MCF 10A (cell line): ENCODE measurements at regions of chr3 and their contacts with region 1.

Region 1: GRCh38 chr3:5122030-5122740 is at the start of gene ARL8B:
- DNase-seq: peak; percentile 84
- H3K4me3 Mint-ChIP-seq: peak within 1 kb of the TSS; percentile 75
- H3K27ac Mint-ChIP-seq: peak within 1 kb of the TSS; percentile 82
- H3K4me1 Mint-ChIP-seq: peaks cover 12% of the 10 kb centered on the region
- H3K27me3 Mint-ChIP-seq: no peaks in the 10 kb centered on the region
- CTCF ChIP-seq: peak; percentile 92
- total RNA-seq, gene ARL8B: 53.6 and 74.3 TPM in 2 replicates

Region 2: DNA sequence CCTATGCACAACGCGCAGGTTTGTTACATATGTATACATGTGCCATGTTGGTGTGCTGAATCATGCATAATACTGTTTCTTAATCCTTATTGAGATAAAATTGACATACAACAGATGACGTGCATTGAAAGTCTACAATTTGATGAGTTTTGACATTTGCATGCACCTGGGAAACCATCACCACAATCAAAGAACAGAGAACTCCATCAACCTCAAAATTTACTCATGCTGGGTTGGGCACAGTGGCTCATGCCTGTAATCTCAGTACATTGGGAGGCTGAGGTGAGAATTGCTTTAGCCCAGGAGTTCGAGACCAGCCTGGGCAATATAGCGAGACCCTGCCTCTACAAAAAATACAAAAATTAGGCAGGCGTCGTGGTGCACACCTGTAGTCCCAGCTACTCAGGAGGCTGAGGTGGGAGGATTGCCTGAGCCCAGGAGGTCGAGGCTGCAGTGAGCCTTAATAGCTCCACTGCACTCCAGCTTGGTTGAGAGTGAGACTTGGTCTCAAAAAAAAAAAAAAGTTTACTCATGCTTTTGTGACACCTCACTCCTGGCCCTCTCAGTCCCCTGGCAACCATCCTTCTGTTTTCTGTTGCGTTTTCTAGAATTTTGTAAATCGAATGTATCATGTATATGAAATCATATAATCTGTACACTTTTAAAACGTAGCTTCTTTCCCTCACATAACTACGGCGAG is 86.3 kb before region 1 on chr3:
- CTCF ChIA-PET with region 1: no interaction called
- POLR2A ChIA-PET with region 1: no interaction called
- intact Hi-C with region 1: no loop called
- DNase-seq: no peak
- H3K4me3 Mint-ChIP-seq: no peak overlapping the region
- H3K27ac Mint-ChIP-seq: no peak overlapping the region
- H3K4me1 Mint-ChIP-seq: no peaks in the 10 kb centered on the region
- H3K27me3 Mint-ChIP-seq: no peaks in the 10 kb centered on the region
- CTCF ChIP-seq: no peak

Region 3: DNA sequence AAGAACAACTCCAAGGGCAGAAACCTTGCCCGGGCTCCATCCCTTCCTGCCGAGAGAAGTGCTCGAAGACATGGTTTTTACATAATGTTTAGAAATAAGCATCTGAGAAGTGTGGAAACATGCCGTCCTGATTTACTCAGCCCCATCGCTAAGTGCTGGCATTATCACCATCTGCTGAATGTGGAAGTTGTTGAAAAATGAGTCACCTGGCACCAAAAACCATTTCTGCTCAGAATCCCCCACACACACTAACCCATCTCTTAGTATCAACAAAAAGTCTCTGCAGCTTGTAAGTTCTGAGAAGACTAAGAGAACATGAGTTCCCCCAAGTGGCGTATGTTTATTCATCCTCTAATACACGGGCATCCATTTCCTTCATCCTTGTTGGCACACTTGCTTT is 51.1 kb before region 1 on chr3:
- CTCF ChIA-PET with region 1: interaction called, 13 read pairs
- POLR2A ChIA-PET with region 1: interaction called, 23 read pairs
- intact Hi-C with region 1: no loop called
- DNase-seq: peak; percentile 78
- H3K4me3 Mint-ChIP-seq: no peak overlapping the region
- H3K27ac Mint-ChIP-seq: peak overlapping the region; percentile 42
- H3K4me1 Mint-ChIP-seq: peaks cover 24% of the 10 kb centered on the region
- H3K27me3 Mint-ChIP-seq: no peaks in the 10 kb centered on the region
- CTCF ChIP-seq: no peak

Region 4: GRCh38 chr3:5078151-5078550 is 44.0 kb before region 1 on chr3:
- CTCF ChIA-PET with region 1: interaction called, 13 read pairs
- POLR2A ChIA-PET with region 1: interaction called, 21 read pairs
- intact Hi-C with region 1: no loop called
- DNase-seq: peak; percentile 89
- H3K4me3 Mint-ChIP-seq: no peak overlapping the region
- H3K27ac Mint-ChIP-seq: peak overlapping the region; percentile 27
- H3K4me1 Mint-ChIP-seq: peaks cover 5% of the 10 kb centered on the region
- H3K27me3 Mint-ChIP-seq: no peaks in the 10 kb centered on the region
- CTCF ChIP-seq: no peak

Region 5: DNA sequence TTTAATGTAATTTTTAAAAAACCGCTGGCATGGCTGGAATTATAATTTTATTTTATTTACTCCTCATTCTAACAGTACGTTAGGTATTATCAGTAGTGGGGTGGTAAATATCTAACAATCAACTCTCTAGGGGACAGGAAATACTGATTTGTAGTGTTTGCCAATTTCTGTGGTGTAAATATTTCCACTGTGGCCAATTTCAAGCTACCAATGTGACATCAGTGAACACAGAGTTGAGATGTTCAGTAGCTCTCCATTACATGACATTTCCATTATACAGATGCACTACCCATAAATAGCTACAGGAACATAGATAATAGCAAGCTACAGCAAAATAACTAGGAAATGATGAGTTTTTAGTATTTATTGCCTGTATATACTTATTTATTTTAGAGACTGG is 10.1 kb before region 1 on chr3:
- CTCF ChIA-PET with region 1: interaction called, 10 read pairs
- POLR2A ChIA-PET with region 1: interaction called, 3 read pairs
- intact Hi-C with region 1: no loop called
- DNase-seq: no peak
- H3K4me3 Mint-ChIP-seq: no peak overlapping the region
- H3K27ac Mint-ChIP-seq: no peak overlapping the region
- H3K4me1 Mint-ChIP-seq: peaks cover 10% of the 10 kb centered on the region
- H3K27me3 Mint-ChIP-seq: no peaks in the 10 kb centered on the region
- CTCF ChIP-seq: no peak

Region 6: DNA sequence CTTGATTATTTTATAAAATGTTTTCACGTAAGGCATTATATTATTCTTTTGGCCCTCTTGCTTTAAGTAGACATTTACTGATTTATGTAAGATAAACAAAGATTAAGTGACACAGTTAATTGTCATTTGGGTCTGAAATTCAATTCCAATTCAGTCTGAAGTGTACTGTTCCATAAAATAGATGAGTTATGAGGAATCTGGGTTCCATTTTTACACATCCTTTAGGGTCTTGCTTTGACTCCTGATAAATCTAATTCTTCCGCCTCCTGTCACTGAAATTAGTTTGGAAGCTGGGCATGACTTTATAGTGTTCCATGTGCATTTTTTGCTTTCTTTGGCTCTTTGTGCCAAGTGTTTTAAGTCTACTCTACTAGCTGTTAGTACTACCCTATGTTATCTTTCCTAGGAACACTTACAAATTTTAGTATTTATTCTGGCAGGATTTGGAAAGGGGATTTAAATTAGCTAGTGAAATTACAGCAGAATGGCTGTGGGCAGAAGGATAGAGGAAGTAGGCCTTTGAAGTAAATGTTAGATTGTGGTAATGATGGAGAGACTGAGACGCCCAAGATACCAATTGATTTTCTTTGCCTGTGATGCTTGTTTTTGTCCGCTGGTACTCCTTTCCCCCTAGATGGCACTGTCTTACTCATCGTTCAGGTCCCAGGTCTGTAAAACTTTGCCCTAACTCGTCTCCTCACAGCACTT is 14.2 kb after region 1 on chr3:
- CTCF ChIA-PET with region 1: interaction called, 11 read pairs
- POLR2A ChIA-PET with region 1: interaction called, 18 read pairs
- intact Hi-C with region 1: no loop called
- DNase-seq: peak; percentile 66
- H3K4me3 Mint-ChIP-seq: peak overlapping the region; percentile 11
- H3K27ac Mint-ChIP-seq: peak overlapping the region; percentile 86
- H3K4me1 Mint-ChIP-seq: peaks cover 63% of the 10 kb centered on the region
- H3K27me3 Mint-ChIP-seq: no peaks in the 10 kb centered on the region
- CTCF ChIP-seq: peak; percentile 31

Region 7: GRCh38 chr3:5187156-5187919 is 65.2 kb after region 1 on chr3 and contains the start of gene EDEM1:
- CTCF ChIA-PET with region 1: interaction called, 80 read pairs
- POLR2A ChIA-PET with region 1: interaction called, 190 read pairs
- intact Hi-C with region 1: loop called (anchors 5 kb)
- DNase-seq: peak; percentile 95
- H3K4me3 Mint-ChIP-seq: peak within 1 kb of the TSS; percentile 70
- H3K27ac Mint-ChIP-seq: peak within 1 kb of the TSS; percentile 95
- H3K4me1 Mint-ChIP-seq: peaks cover 24% of the 10 kb centered on the region
- H3K27me3 Mint-ChIP-seq: no peaks in the 10 kb centered on the region
- CTCF ChIP-seq: no peak
- total RNA-seq, gene EDEM1: 114 and 157 TPM in 2 replicates

Region 8: DNA sequence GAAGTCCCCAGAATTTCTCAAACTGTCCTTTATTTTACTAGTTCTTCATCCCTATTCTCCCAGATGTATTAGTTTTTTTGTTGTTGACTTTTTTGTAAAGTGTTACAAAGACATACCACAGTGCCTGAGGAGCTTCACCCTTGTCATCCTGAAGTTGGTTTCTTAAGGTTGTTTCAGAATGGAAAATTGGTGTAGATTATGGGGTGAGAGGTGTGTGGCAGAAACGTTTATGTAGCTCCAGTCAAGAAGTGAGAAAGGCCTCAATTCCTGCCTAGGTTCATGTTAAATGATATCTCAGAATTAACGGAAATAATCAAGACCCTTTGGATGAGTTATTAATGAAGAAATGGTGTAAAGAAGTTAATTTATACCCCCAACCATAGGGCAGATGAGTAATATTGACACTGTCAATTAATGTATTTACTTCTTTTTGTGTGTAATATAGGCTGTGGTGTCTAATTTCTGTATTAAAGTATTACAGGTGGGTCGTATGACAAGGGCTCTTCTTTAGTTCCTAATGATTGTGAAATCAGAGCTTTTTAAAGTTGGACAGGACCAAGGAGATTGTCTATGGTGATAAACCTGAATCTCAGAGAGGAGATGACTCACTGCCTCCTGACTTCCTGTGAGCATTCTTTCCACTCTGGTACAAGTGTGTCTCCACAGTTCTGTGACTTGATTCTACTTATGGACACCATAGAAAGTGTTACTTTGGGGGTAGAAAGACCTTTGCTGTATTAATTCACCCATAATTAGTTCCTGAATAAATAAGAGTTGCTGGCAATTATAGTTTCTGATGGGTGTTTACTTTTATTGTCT is 72.4 kb after region 1 on chr3:
- CTCF ChIA-PET with region 1: interaction called, 80 read pairs
- POLR2A ChIA-PET with region 1: interaction called, 190 read pairs
- intact Hi-C with region 1: loop called (anchors 2 kb)
- DNase-seq: peak; percentile 91
- H3K4me3 Mint-ChIP-seq: peak overlapping the region; percentile 52
- H3K27ac Mint-ChIP-seq: peak overlapping the region; percentile 95
- H3K4me1 Mint-ChIP-seq: peaks cover 74% of the 10 kb centered on the region
- H3K27me3 Mint-ChIP-seq: no peaks in the 10 kb centered on the region
- CTCF ChIP-seq: no peak

Region 9: GRCh38 chr3:5231074-5231473 is 108.9 kb after region 1 on chr3:
- CTCF ChIA-PET with region 1: no interaction called
- POLR2A ChIA-PET with region 1: no interaction called
- intact Hi-C with region 1: no loop called
- DNase-seq: no peak
- H3K4me3 Mint-ChIP-seq: no peak overlapping the region
- H3K27ac Mint-ChIP-seq: no peak overlapping the region
- H3K4me1 Mint-ChIP-seq: no peaks in the 10 kb centered on the region
- H3K27me3 Mint-ChIP-seq: no peaks in the 10 kb centered on the region
- CTCF ChIP-seq: no peak